ENCODE measurements at regions of chr1 and their contacts with region 1.

Region 1: DNA sequence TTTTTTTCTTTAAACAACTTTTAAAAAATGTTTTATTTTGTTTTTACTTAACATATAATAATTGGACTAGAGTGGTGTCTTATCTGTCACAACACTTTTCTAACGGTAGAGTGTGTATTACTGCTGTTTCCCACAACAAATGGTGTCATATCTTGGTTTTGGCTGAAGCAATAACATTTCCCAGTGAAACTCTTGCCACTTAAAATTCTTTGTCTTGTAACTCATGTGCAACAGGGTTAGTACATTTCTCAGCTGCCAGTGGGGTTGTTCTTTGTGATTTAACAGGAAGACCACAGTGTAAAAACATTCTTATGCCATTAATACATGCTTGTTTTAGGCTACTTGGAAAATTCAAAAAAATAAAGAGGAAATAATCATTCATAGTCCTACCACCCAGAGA is 43.5 kb downstream of the ALPL start:
- DNase-seq: no peak
- ATAC-seq: no peak
- H3K4me3 ChIP-seq: no peak overlapping the region
- H3K27ac ChIP-seq: no peak overlapping the region
- H3K4me1 ChIP-seq: peaks cover 4% of the 10 kb centered on the region; the same call in 1 of the 3 replicates
- CTCF ChIP-seq: no peak
- EP300 ChIP-seq: no peak
- POLR2A ChIP-seq: no peak
- RAD21 ChIP-seq: no peak

Region 2: GRCh38 chr1:21406659-21407058 is 146.1 kb before region 1 on chr1:
- CTCF ChIA-PET with region 1: no interaction called
- POLR2A ChIA-PET with region 1: interaction called, 12 read pairs
- DNase-seq: no peak
- ATAC-seq: no peak
- H3K4me3 ChIP-seq: no peak overlapping the region
- H3K27ac ChIP-seq: no peak overlapping the region
- H3K4me1 ChIP-seq: no peaks in the 10 kb centered on the region
- CTCF ChIP-seq: no peak
- EP300 ChIP-seq: no peak
- POLR2A ChIP-seq: no peak
- RAD21 ChIP-seq: no peak

Measured in A549 (cell line).